ENCODE measurements at regions of chr2 and their contacts with region 1.

Region 1: DNA sequence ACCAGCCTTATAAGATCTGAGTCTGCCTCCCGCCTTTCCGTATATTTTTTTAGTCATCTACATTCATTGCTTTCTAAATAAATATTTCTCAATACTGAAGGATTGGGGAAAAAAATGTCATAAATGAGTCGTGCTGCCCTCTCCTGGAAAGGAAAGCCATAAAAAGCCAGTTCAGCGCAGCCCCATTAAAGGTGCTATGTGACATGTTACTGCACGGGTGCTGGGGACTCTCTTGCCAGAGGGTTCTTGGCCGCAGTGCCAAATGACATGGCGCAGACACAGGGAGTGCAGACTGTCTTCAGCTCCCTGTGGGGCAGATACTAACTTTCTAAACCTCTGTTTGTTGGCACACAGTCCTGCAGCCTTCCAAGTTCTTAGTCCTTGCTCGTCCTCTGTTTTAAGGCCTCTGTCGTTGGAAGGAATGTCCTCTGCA is 53.7 kb upstream of the MAP3K20 start:
- DNase-seq: peak; percentile 45 to 49
- ATAC-seq: peak; percentile 56 to 91 (median 86)
- H3K4me3 ChIP-seq: no peak overlapping the region
- H3K27ac ChIP-seq: peak overlapping the region in 7 of 10 donors; percentile 39 to 66 (median 61)
- H3K4me1 ChIP-seq: peaks cover 0 to 26% (median 6%) of the 10 kb centered on the region in 9 donors
- H3K27me3 ChIP-seq: no peaks in the 10 kb centered on the region
- CTCF ChIP-seq: peak in 8 of 9 donors; percentile 13 to 58 (median 43)

Region 2: DNA sequence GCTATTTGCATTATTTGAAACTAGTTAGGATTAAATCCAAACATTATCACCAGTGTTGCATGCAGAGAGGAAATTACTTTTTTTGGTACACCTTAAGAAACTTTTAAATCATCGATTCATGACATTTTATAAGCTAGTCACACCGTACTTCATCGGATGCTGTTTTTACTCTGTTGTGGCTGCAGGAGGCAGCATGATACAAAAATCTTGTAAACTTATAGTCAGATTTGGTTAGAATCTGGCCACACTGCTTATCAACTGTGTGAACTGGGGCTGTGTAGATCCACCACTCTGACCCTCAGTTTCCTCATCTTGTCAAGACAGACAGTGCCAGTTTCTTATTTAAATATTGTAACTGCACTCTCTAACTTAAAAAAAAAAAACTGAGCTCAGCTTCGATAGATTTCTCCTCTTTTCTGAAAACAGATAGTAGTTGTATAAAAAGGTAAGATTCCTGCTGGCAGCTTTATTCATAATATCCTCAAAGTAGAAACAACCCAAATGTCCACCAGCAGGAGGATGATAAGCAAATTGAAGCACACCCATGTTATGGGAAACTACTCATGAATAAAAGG is 208.6 kb before region 1 on chr2:
- intact Hi-C with region 1: loop called in 4 of 10 experiments (anchors 5 to 10 kb)
- DNase-seq: peak in 1 of 2 donors; percentile 23
- ATAC-seq: peak in 7 of 8 donors; percentile 55 to 88 (median 67)
- H3K4me3 ChIP-seq: no peak overlapping the region
- H3K27ac ChIP-seq: no peak overlapping the region
- H3K4me1 ChIP-seq: peaks cover 0 to 5% (median 0%) of the 10 kb centered on the region in 9 donors
- H3K27me3 ChIP-seq: peaks cover 0 to 12% (median 0%) of the 10 kb centered on the region in 7 donors
- CTCF ChIP-seq: peak; percentile 29 to 79 (median 56)

Region 3: DNA sequence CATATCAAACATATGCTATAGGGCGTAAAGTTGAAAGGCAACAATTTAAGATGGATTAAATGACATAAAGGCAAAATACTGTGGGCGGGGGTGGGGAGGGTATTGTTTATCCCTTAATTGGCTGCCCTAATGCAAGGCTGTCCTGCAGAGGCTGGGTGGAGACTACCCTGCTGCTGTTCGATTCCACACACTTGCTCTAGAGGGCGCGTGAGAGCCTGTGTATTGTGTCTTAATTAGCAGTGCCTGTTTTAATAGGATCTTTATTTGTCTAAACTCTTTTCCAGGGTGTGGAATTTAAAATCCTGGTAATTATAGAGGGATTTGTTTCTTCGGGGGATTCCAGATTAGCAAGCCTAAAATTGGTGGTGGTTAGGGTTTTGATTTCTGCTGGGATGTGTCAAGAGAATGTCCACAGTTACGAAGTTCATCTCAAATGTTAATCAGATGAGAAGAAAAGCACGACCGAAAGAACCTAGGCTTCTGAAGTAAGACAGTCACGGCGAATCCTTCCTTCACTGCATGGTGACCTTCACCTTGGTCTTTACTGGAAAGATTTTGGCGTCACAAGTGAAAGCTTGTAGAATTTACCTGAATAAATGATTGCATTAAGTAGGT is 49.8 kb before region 1 on chr2:
- intact Hi-C with region 1: loop called in 5 of 10 experiments (anchors 5 to 10 kb)
- DNase-seq: peak; percentile 27 to 42
- ATAC-seq: peak in 3 of 8 donors; percentile 34 to 48 (median 35)
- H3K4me3 ChIP-seq: no peak overlapping the region
- H3K27ac ChIP-seq: no peak overlapping the region
- H3K4me1 ChIP-seq: peaks cover 8 to 40% (median 24%) of the 10 kb centered on the region in 9 donors
- H3K27me3 ChIP-seq: no peaks in the 10 kb centered on the region
- CTCF ChIP-seq: peak; percentile 59 to 89 (median 72)

Region 4: DNA sequence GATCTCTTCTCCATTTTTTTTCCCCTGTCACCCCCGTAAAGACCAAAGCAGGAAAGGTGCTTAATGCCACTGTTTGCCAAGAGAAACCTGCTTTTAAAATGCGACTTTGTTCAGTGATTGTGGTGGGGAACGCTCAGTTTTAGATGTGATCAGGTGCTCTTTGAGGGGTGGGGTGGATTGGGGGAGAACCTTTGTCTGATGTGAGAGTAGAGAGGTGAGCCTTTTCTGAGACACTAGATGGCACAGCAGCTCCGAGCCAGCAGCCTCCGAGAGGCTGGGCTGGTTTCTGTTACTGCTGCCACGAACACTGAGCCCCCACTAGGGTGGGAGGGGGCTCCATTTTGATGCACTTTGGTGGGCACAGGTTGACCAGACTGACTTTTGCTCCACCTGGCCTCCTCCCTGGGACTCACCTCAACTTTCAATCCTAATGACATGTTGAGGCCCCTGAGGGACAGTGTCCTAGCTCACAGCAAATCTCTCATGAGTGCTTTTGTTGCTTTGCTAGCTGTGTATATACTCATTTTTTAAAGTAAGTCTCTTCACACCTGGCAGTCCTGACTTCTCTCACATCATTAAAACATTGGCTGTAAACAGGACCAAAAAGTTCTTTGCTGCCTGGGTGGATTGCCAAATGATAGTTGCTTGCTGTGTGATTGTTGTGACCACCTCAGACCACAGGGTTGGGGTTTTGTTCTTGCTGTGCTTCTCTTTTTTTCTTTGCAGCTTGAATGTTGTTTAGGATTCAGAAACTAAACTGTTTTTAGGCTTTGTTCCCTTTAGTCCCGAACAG is 44.5 kb before region 1 on chr2:
- intact Hi-C with region 1: loop called in 5 of 10 experiments (anchors 5 to 10 kb)
- DNase-seq: no peak
- ATAC-seq: peak in 7 of 8 donors; percentile 51 to 77 (median 65)
- H3K4me3 ChIP-seq: no peak overlapping the region
- H3K27ac ChIP-seq: no peak overlapping the region
- H3K4me1 ChIP-seq: peaks cover 0 to 12% (median 6%) of the 10 kb centered on the region in 9 donors
- H3K27me3 ChIP-seq: no peaks in the 10 kb centered on the region
- CTCF ChIP-seq: peak in 7 of 9 donors; percentile 14 to 58 (median 40)

Region 5: DNA sequence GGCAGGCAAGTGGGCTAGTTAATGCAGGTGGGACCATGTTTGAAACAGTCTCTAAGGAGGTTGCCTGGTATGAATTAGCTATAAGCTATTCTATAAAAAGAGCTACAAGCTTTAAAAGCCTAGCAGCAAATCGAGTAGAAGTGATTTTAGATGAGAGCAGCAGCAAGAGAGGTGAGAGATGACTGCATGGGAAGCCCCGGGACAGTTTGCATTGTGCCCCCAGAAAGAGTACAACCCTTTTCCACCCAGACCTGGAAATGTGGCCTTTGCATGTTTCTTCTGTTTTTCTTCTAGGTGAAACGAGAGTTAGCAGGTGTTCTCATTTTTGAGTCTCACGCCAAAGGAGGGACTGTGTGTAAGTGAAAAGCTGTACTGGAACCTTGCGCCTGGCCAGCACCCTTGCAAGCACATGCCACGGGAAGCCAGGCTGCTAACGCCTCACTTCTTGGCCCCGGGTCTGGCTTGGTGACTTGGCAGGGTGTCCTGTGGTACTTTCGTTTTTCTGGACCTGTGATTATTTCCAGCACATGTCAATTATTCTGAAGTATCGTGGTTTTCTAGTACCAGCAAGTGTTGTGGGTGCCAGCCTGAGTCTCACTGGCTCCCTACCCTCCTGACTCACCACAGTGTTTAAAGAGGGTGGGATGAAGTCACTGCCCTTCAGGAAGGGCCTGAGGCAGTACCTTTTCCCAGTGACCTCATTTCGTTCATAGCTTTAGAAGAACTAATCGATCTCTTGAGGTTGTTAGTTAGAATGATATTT is 36.6 kb before region 1 on chr2:
- intact Hi-C with region 1: loop called in 1 of 10 experiments (anchors 5 kb)
- DNase-seq: peak in 1 of 2 donors; percentile 25
- ATAC-seq: peak; percentile 38 to 94 (median 83)
- H3K4me3 ChIP-seq: no peak overlapping the region
- H3K27ac ChIP-seq: peak overlapping the region in 7 of 10 donors; percentile 12 to 61 (median 49)
- H3K4me1 ChIP-seq: peaks cover 3 to 18% (median 14%) of the 10 kb centered on the region in 9 donors
- H3K27me3 ChIP-seq: no peaks in the 10 kb centered on the region
- CTCF ChIP-seq: no peak

Region 6: DNA sequence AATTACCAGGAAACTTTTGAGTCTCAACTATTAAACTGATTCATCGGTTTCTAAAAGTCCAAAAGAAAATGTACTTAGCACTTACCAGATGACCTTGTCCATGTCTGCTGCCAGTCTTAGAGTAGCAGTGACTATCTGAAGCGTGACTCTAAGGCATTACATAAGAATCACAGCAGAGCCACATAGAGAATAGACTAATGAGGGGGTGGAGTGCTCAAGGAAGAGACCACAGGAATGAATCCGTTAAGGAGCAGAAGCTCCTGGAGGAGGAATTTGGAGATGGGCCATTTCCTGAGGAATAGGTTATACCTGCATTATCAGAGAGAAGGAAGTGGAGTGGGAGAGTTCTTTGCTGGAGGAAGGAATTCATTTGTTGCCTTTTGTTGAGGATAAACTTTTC is 169.6 kb after region 1 on chr2:
- intact Hi-C with region 1: no loop called
- DNase-seq: no peak
- ATAC-seq: peak in 3 of 8 donors; percentile 38 to 48 (median 43)
- H3K4me3 ChIP-seq: no peak overlapping the region
- H3K27ac ChIP-seq: peak overlapping the region in 8 of 10 donors; percentile 12 to 68 (median 52)
- H3K4me1 ChIP-seq: peaks cover 0 to 100% (median 69%) of the 10 kb centered on the region in 9 donors
- H3K27me3 ChIP-seq: no peaks in the 10 kb centered on the region
- CTCF ChIP-seq: no peak

Measured in heart right ventricle (tissue), 16 donors.